ENCODE measurements at regions of chr12 and their contacts with region 1.

Region 1: GRCh38 chr12:102033991-102034745 is 27.6 kb downstream of the WASHC3 start:
- DNase-seq: no peak
- H3K4me3 ChIP-seq: no peak overlapping the region
- H3K4me3 Mint-ChIP-seq: no peak overlapping the region
- H3K27ac ChIP-seq: no peak overlapping the region
- H3K27ac Mint-ChIP-seq: no peak overlapping the region
- H3K4me1 ChIP-seq: no peaks in the 10 kb centered on the region
- H3K4me1 Mint-ChIP-seq: peaks cover 0 to 4% (median 1%) of the 10 kb centered on the region in 4 donors
- H3K27me3 ChIP-seq: no peaks in the 10 kb centered on the region
- H3K27me3 Mint-ChIP-seq: no peaks in the 10 kb centered on the region

Region 2: GRCh38 chr12:102021540-102022246 is 12.5 kb before region 1 on chr12:
- CTCF ChIA-PET with region 1: interaction called, 4 read pairs
- POLR2A ChIA-PET with region 1: no interaction called
- intact Hi-C with region 1: loop called (anchors 2 kb)
- DNase-seq: no peak
- H3K4me3 ChIP-seq: no peak overlapping the region
- H3K4me3 Mint-ChIP-seq: no peak overlapping the region
- H3K27ac ChIP-seq: no peak overlapping the region
- H3K27ac Mint-ChIP-seq: no peak overlapping the region
- H3K4me1 ChIP-seq: no peaks in the 10 kb centered on the region
- H3K4me1 Mint-ChIP-seq: peaks cover 0 to 5% (median 1%) of the 10 kb centered on the region in 4 donors
- H3K27me3 ChIP-seq: no peaks in the 10 kb centered on the region
- H3K27me3 Mint-ChIP-seq: no peaks in the 10 kb centered on the region

Measured in CD4-positive, alpha-beta memory T cell (primary cell).